Activated CD4-positive, alpha-beta memory T cell treated with anti-CD3 and anti-CD28 coated beads for 36 hours (primary cell): ENCODE measurements at regions of chr1 and their contacts with region 1.

Region 1: DNA sequence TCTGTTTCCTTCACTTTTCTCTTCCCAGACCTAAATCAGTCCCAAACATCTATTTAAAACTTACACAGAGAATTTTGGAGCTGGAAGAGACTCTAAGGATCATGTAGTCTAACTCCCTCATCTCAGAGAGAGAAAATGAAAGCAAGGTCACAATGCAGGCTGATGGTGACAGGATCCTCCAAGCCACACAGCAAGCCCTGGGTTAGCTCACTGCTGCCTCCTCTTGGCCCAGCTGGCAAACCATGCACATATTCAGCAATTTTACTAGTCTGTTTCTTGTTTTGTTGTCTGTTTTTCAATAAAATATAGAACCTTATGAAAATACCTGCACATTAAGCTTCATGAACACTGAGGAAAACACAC is 27.7 kb upstream of the LY9 start:
- DNase-seq: peak; percentile 93
- H3K4me3 Mint-ChIP-seq: peak overlapping the region; percentile 78
- H3K27ac Mint-ChIP-seq: peak overlapping the region; percentile 96
- H3K4me1 Mint-ChIP-seq: peaks cover 28% of the 10 kb centered on the region
- H3K27me3 Mint-ChIP-seq: no peaks in the 10 kb centered on the region

Region 2: GRCh38 chr1:160161965-160162705 is 606.1 kb before region 1 on chr1:
- CTCF ChIA-PET with region 1: no interaction called
- POLR2A ChIA-PET with region 1: no interaction called
- intact Hi-C with region 1: no loop called
- DNase-seq: no peak
- H3K4me3 Mint-ChIP-seq: no peak overlapping the region
- H3K27ac Mint-ChIP-seq: no peak overlapping the region
- H3K4me1 Mint-ChIP-seq: peaks cover 6% of the 10 kb centered on the region
- H3K27me3 Mint-ChIP-seq: peaks cover 5% of the 10 kb centered on the region

Region 3: GRCh38 chr1:160579216-160579701 is 189.0 kb before region 1 on chr1 and contains the start of gene CD84:
- CTCF ChIA-PET with region 1: no interaction called
- POLR2A ChIA-PET with region 1: no interaction called
- intact Hi-C with region 1: no loop called
- DNase-seq: no peak
- H3K4me3 Mint-ChIP-seq: peak within 1 kb of the TSS; percentile 83
- H3K27ac Mint-ChIP-seq: peak within 1 kb of the TSS; percentile 96
- H3K4me1 Mint-ChIP-seq: peaks cover 78% of the 10 kb centered on the region
- H3K27me3 Mint-ChIP-seq: no peaks in the 10 kb centered on the region
- total RNA-seq, gene CD84: 18.6 to 20.2 TPM

Region 4: DNA sequence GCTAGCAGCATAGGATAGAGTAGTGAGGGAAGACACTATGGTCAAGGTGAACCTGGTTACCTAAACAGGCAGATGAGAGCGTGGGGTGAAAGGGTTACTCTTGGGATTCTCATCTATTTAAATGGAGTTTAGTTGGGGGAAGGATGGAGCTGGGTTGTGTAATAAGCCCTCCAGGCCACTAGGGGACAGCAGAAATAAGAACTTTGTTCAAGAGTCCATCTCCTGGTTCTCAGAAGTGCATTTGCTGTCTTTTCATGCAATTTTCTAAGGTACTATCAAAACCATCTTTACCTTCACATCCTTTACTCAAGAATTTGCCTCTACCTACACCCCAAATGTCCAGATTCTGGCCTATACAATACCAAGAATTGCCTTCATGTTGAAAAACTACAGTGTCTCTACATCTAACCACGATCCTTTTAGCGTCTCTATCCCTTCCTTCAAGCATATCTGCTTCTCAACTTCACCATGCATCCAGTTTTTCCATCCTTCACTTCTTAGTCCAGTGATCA is 149.5 kb before region 1 on chr1:
- CTCF ChIA-PET with region 1: interaction called, 16 read pairs
- POLR2A ChIA-PET with region 1: no interaction called
- intact Hi-C with region 1: no loop called
- DNase-seq: peak; percentile 59
- H3K4me3 Mint-ChIP-seq: no peak overlapping the region
- H3K27ac Mint-ChIP-seq: peak overlapping the region; percentile 68
- H3K4me1 Mint-ChIP-seq: peaks cover 63% of the 10 kb centered on the region
- H3K27me3 Mint-ChIP-seq: no peaks in the 10 kb centered on the region

Region 5: GRCh38 chr1:160711602-160712311 is 56.5 kb before region 1 on chr1 and contains the start of gene CD48:
- CTCF ChIA-PET with region 1: interaction called, 20 read pairs
- POLR2A ChIA-PET with region 1: interaction called, 6 read pairs
- intact Hi-C with region 1: loop called (anchors 1 kb)
- DNase-seq: peak; percentile 65
- H3K4me3 Mint-ChIP-seq: no peak within 1 kb of the TSS
- H3K27ac Mint-ChIP-seq: no peak within 1 kb of the TSS
- H3K4me1 Mint-ChIP-seq: peaks cover 17% of the 10 kb centered on the region
- H3K27me3 Mint-ChIP-seq: no peaks in the 10 kb centered on the region
- total RNA-seq, gene CD48: 190 to 194 TPM

Region 6: GRCh38 chr1:160726498-160727315 is 41.6 kb before region 1 on chr1:
- CTCF ChIA-PET with region 1: interaction called, 205 read pairs
- POLR2A ChIA-PET with region 1: interaction called, 13 read pairs
- intact Hi-C with region 1: loop called (anchors 1 kb)
- DNase-seq: peak; percentile 72
- H3K4me3 Mint-ChIP-seq: no peak overlapping the region
- H3K27ac Mint-ChIP-seq: no peak overlapping the region
- H3K4me1 Mint-ChIP-seq: peaks cover 24% of the 10 kb centered on the region
- H3K27me3 Mint-ChIP-seq: no peaks in the 10 kb centered on the region

Region 7: GRCh38 chr1:160739098-160739511 is 29.2 kb before region 1 on chr1 and contains the start of gene SLAMF7:
- CTCF ChIA-PET with region 1: interaction called, 85 read pairs
- POLR2A ChIA-PET with region 1: interaction called, 3 read pairs
- intact Hi-C with region 1: no loop called
- DNase-seq: peak; percentile 54
- H3K4me3 Mint-ChIP-seq: peak within 1 kb of the TSS; percentile 68
- H3K27ac Mint-ChIP-seq: peak within 1 kb of the TSS; percentile 49
- H3K4me1 Mint-ChIP-seq: peaks cover 52% of the 10 kb centered on the region
- H3K27me3 Mint-ChIP-seq: no peaks in the 10 kb centered on the region
- total RNA-seq, gene SLAMF7: 11.4 to 15.9 TPM

Region 8: DNA sequence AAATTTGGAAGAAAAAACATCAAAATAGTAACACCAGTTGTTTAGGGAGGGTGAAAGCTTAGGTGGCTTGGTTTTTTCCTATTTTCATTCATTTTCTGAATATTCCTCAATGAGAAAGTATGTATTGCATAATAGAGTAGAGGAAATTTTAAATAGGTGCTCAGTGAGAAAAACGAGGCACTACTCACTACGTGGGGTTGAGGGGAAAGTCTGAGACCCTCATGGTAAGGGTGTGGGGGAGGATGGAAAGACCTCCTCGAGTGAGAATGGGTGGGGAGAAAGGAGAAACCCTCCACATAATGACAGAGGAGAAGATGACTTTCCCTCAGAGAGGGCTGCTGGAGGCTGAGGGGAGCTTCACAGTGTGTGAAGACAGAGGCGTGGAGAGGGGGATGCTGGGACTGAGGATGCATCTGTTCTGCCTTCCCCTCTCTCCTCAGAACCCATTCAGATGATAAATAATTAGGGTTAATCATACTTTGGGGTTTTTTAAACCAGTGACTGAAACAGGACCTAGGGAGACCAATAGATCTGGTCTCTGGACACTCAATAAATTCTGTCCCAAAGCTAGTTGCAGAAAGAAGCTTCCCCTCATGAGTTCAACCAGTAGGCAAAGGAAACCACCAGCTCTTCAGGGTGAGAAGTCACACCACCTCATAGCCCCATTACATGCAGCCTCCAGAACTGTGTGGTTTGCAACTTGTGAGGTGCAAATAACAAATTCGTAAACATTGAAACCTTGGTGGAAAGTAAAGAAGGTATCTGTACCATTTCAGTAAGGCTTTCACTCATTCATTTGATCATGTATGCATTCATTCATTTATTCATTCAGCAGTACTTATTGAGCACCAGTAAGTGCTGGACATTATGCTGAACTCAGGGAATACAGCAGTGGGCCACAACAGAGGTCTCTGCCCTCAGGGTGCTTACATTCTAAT is 12.1 kb before region 1 on chr1:
- CTCF ChIA-PET with region 1: interaction called, 15 read pairs
- POLR2A ChIA-PET with region 1: interaction called, 3 read pairs
- intact Hi-C with region 1: no loop called
- DNase-seq: no peak
- H3K4me3 Mint-ChIP-seq: no peak overlapping the region
- H3K27ac Mint-ChIP-seq: peak overlapping the region; percentile 64
- H3K4me1 Mint-ChIP-seq: peaks cover 32% of the 10 kb centered on the region
- H3K27me3 Mint-ChIP-seq: no peaks in the 10 kb centered on the region

Region 9: DNA sequence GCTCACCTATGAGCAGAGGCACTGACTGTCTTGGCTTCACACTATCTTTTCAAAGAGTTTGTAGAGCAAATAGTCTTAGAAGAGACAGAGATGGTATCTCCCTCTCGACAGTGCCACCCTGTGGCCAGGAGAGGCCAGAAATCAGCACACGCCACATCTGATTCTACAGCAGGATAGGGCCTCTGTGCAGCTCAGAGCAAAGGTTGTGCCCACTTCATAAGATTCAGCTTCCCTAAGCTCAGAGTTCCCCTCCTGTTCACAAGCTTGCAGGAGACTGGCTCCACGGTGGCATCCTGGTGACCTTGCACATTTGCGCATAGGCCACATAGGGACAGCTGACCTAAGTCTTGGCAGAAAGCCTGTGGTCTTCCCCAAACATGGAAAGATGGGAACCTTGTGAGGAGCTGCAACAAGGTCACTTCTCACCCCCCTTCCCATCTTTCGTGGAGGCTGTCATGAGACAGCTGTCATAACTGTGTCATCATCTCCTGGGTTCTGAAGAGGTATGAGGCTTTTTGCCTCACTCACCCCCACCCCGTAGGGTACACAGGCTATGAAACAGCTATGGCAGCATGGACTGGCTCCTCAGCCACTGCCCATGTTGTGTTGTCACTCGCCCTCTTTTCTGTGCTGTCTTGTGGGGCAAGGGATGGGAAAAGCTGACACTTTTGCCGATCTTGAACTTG is 183.3 kb after region 1 on chr1:
- CTCF ChIA-PET with region 1: interaction called, 154 read pairs
- POLR2A ChIA-PET with region 1: no interaction called
- intact Hi-C with region 1: no loop called
- DNase-seq: peak; percentile 81
- H3K4me3 Mint-ChIP-seq: no peak overlapping the region
- H3K27ac Mint-ChIP-seq: no peak overlapping the region
- H3K4me1 Mint-ChIP-seq: peaks cover 2% of the 10 kb centered on the region
- H3K27me3 Mint-ChIP-seq: no peaks in the 10 kb centered on the region